Mammary epithelial cell (primary cell): ENCODE measurements at regions of chr15 and their contacts with region 1.

Region 1: GRCh38 chr15:43625106-43625505 is 6.5 kb upstream of the STRC start:
- DNase-seq: no peak
- H3K4me3 ChIP-seq: no peak overlapping the region
- H3K27ac ChIP-seq: no peak overlapping the region
- H3K4me1 ChIP-seq: no peaks in the 10 kb centered on the region
- H3K27me3 ChIP-seq: no peaks in the 10 kb centered on the region
- CTCF ChIP-seq: no peak

Region 2: DNA sequence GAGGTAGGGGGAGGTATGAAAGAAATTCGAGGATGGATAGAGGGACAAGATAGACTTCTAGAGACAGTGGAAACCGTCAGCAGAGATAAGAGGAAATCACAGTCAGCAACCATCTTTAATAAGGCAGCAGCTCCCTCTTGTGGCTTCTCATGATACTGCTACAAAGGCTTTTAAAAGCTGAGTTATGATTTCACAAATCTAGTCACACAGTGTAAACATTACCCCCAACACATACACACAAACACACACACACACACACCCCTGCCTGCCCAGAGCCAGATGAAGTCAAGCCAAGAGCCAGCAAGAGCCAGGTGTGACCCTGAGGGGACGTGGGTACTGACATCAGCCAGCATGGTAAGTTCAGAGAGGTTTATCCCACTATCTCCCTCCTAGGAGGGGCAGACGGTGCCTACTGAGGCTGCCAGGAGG is 339.5 kb before region 1 on chr15:
- CTCF ChIA-PET with region 1: no interaction called
- dilution Hi-C with region 1: no loop called
- in situ Hi-C with region 1: no loop called
- intact Hi-C with region 1: no loop called
- DNase-seq: peak; percentile 46
- H3K4me3 ChIP-seq: no peak overlapping the region
- H3K27ac ChIP-seq: no peak overlapping the region
- H3K4me1 ChIP-seq: no peaks in the 10 kb centered on the region
- H3K27me3 ChIP-seq: no peaks in the 10 kb centered on the region
- CTCF ChIP-seq: peak; percentile 78 to 88

Region 3: GRCh38 chr15:43410572-43411214 is 214.4 kb before region 1 on chr15:
- CTCF ChIA-PET with region 1: no interaction called
- dilution Hi-C with region 1: no loop called
- in situ Hi-C with region 1: no loop called
- intact Hi-C with region 1: no loop called
- DNase-seq: peak; percentile 24
- H3K4me3 ChIP-seq: no peak overlapping the region
- H3K27ac ChIP-seq: no peak overlapping the region
- H3K4me1 ChIP-seq: no peaks in the 10 kb centered on the region
- H3K27me3 ChIP-seq: no peaks in the 10 kb centered on the region
- CTCF ChIP-seq: no peak

Region 4: GRCh38 chr15:43524254-43524845 is 100.8 kb before region 1 on chr15:
- CTCF ChIA-PET with region 1: no interaction called
- dilution Hi-C with region 1: loop called (anchors 5 kb)
- in situ Hi-C with region 1: no loop called
- intact Hi-C with region 1: no loop called
- DNase-seq: no peak
- H3K4me3 ChIP-seq: no peak overlapping the region
- H3K27ac ChIP-seq: no peak overlapping the region
- H3K4me1 ChIP-seq: no peaks in the 10 kb centered on the region
- H3K27me3 ChIP-seq: peaks cover 2% of the 10 kb centered on the region
- CTCF ChIP-seq: no peak

Region 5: GRCh38 chr15:43723151-43723550 is 98.0 kb after region 1 on chr15:
- CTCF ChIA-PET with region 1: no interaction called
- dilution Hi-C with region 1: no loop called
- in situ Hi-C with region 1: loop called in 1 of 2 experiments (anchors 5 kb)
- intact Hi-C with region 1: no loop called
- DNase-seq: no peak
- H3K4me3 ChIP-seq: no peak overlapping the region
- H3K27ac ChIP-seq: no peak overlapping the region
- H3K4me1 ChIP-seq: no peaks in the 10 kb centered on the region
- H3K27me3 ChIP-seq: no peaks in the 10 kb centered on the region
- CTCF ChIP-seq: no peak